CD4-positive, alpha-beta T cell (primary cell): ENCODE measurements at regions of chr17 and their contacts with region 1.

Region 1: DNA sequence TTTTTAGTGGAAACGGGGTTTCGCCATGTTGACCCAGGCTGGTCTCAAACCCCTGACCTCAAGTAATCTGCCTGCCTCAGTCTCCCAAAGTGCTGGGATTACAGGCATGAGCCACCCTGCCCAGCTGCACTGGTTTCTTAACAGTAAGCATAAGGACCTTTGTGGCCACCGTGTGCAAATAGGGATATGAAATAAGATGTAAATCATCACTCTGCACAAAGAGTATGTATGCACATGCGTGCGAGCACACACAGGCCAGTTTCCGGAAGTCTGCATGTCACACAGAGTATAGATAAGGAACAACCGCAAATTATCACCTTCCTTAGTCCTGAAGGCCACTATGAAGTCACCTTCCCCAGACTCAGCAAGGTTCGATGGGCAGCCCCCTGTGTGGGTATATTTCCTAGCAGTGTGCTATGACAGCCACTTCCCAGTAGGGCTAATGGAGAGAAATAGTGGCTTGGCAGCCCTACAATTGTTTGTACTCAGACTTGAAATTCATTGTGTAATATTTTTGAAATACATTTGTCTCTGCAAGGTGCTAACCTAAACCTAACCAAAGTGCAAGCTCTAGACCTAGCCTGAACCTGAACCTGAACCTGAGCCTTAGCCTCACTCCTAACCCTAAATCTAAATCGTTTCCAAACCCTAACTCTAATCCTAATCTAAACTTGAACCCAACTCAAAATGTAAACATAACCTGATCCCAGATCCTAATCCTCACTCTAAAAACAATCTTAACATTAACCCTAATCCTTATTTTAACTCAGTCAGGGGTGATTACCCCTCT is 48.4 kb upstream of the SKAP1 start:
- DNase-seq: peak in 4 of 14 experiments; percentile 21 to 67 (median 51)
- ATAC-seq: peak; percentile 37
- H3K4me3 ChIP-seq: no peak overlapping the region
- H3K4me3 Mint-ChIP-seq: no peak overlapping the region
- H3K27ac ChIP-seq: no peak overlapping the region
- H3K27ac Mint-ChIP-seq: no peak overlapping the region
- H3K4me1 ChIP-seq: peaks cover 5% of the 10 kb centered on the region
- H3K4me1 Mint-ChIP-seq: peaks cover 5% of the 10 kb centered on the region
- H3K27me3 ChIP-seq: no peaks in the 10 kb centered on the region
- H3K27me3 Mint-ChIP-seq: no peaks in the 10 kb centered on the region
- CTCF ChIP-seq: no peak

Region 2: GRCh38 chr17:48522031-48522653 is 43.7 kb after region 1 on chr17:
- CTCF ChIA-PET with region 1: no interaction called
- POLR2A ChIA-PET with region 1: no interaction called
- intact Hi-C with region 1: loop called in 1 of 2 experiments (anchors 10 kb)
- DNase-seq: no peak
- ATAC-seq: no peak
- H3K4me3 ChIP-seq: no peak overlapping the region
- H3K4me3 Mint-ChIP-seq: no peak overlapping the region
- H3K27ac ChIP-seq: no peak overlapping the region
- H3K27ac Mint-ChIP-seq: no peak overlapping the region
- H3K4me1 ChIP-seq: peaks cover 5% of the 10 kb centered on the region
- H3K4me1 Mint-ChIP-seq: no peaks in the 10 kb centered on the region
- H3K27me3 ChIP-seq: peaks cover 19 to 25% of the 10 kb centered on the region in 2 experiments
- H3K27me3 Mint-ChIP-seq: peaks cover 74% of the 10 kb centered on the region
- CTCF ChIP-seq: no peak